ENCODE measurements at regions of chr18 and their contacts with region 1.

Region 1: DNA sequence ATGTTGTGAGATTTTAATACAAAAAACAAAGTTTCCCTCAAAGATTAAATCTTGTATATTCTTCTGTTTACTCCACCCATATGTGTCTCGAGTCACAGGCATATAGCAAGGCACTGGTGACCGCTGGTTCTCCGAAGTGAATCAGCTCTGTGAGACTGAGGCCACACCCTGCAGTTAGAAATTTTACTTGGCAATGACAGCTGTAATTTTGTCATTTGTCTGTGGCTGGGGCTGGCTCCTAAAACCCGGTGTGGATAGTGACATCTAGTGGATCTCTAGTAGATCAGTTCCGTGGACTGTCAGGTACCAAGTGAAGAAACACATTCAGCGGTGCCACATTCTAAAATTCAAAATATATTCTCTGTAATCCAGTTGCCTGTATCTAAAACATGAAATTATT is 278.0 kb downstream of the NEDD4L start:
- DNase-seq: peak; percentile 65
- H3K4me3 ChIP-seq: no peak overlapping the region
- H3K27ac ChIP-seq: peak overlapping the region; percentile 45
- H3K4me1 ChIP-seq: peaks cover 10% of the 10 kb centered on the region
- H3K27me3 ChIP-seq: no peaks in the 10 kb centered on the region
- CTCF ChIP-seq: peak; percentile 37 to 42
- POLR2A ChIP-seq: no peak

Region 2: GRCh38 chr18:57959278-57959677 is 362.7 kb before region 1 on chr18:
- CTCF ChIA-PET with region 1: no interaction called
- POLR2A ChIA-PET with region 1: no interaction called
- dilution Hi-C with region 1: no loop called
- intact Hi-C with region 1: loop called (anchors 10 kb)
- DNase-seq: peak; percentile 59
- H3K4me3 ChIP-seq: no peak overlapping the region
- H3K27ac ChIP-seq: no peak overlapping the region
- H3K4me1 ChIP-seq: peaks cover 3% of the 10 kb centered on the region
- H3K27me3 ChIP-seq: peaks cover 4 to 14% of the 10 kb centered on the region in 2 experiments
- CTCF ChIP-seq: peak; percentile 22 to 44
- POLR2A ChIP-seq: no peak

Region 3: DNA sequence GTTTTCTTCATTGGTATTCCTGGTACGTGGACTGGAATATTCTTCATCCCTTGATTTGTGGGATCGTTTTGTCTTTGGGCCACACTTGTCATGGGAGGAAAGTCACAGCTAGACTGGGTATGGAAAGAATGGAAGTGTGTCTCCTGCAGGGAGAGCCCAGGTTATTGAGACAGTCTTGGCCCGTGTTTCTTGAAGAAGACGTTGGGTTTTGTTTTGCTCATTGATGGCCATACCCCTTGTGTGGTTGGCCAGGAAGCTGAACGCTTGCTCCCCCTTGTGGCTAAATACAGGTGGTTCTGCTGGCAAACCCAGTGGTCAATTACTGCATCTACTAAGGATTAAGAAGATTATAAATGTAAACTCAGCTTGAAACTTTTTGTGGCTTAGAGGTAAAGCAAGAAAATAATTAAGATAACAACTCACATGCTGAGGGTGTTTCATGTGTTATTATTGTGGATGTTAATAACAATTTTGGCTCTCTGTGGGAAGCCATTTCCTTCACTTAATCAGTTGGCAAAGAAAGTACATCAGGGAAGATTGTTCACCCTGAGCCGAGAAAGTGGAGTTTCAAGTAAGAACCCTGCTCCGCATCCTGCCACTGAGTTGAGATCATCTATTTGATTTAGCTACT is 186.2 kb before region 1 on chr18:
- CTCF ChIA-PET with region 1: interaction called, 16 read pairs
- POLR2A ChIA-PET with region 1: no interaction called
- dilution Hi-C with region 1: no loop called
- intact Hi-C with region 1: loop called (anchors 5 kb)
- DNase-seq: peak; percentile 69
- H3K4me3 ChIP-seq: no peak overlapping the region
- H3K27ac ChIP-seq: no peak overlapping the region
- H3K4me1 ChIP-seq: peaks cover 2% of the 10 kb centered on the region
- H3K27me3 ChIP-seq: no peaks in the 10 kb centered on the region
- CTCF ChIP-seq: peak; percentile 85 to 91
- POLR2A ChIP-seq: no peak

Region 4: DNA sequence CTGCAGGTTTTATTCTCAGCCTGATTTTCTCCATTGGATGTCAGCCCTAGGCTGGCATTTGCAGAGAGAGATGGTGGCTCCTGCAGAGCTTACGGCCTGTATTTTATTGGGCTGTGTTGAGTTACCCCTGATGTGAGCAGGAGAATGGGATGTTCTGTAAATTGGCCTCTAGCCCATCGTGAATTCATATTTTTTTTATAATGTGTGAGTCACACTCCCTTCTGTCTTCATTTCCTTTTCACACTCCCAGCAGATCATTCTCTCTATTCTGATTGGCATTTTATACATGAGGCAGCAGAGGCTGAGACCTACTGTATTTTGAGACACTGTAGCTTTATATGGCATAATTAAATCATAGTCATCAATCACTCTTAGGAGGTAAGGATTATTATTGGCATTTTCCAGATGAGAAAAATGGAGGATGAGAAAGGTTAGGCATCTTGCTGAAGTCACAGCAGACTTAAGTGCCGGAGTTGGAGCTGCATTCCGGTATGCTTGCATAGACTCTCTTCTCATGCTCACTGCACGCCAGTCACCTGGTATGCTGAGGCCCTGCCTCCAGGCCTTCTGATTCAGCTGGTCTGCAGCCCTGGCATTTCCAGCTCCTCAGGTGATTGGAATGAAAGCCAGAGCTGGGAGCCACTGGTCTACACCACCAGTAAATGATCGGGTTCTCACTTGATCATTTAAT is 135.6 kb before region 1 on chr18:
- CTCF ChIA-PET with region 1: interaction called, 17 read pairs
- POLR2A ChIA-PET with region 1: no interaction called
- dilution Hi-C with region 1: no loop called
- intact Hi-C with region 1: no loop called
- DNase-seq: peak; percentile 85
- H3K4me3 ChIP-seq: no peak overlapping the region
- H3K27ac ChIP-seq: peak overlapping the region; percentile 27
- H3K4me1 ChIP-seq: peaks cover 23% of the 10 kb centered on the region
- H3K27me3 ChIP-seq: no peaks in the 10 kb centered on the region
- CTCF ChIP-seq: no peak
- POLR2A ChIP-seq: no peak

Region 5: DNA sequence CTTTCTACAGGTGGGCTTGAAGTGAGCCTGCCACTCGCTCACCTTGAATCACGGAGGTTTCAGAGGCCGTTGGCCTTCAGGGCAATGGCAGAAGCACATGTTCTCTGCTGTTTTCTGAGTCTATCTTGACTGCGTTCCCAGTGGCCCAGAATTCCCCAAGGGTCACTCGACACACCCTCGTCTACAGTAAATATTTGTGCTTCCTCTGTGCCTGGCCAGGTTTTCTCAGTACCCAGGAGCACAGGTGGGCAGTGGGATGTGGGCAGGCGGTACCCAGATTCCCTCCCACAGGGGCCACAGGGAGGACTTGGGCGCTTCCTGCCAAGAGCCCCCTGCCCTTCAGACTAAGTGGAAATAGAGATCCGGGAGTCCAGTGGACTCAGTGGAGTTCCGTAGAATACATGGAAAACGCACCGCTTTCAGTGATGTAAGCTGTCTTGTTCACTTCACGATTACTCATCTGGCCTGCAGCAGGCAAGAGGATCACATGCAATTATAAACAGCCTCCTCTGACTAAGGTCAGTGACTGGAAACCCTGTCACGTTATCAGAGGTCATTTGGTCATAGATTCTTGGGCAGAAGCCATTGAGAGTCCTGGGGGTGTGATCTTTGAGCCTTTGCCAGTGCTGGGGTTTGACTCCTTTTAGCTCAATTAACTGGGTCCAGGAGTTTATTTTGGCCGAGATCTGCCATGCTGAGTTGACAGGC is 98.1 kb before region 1 on chr18:
- CTCF ChIA-PET with region 1: interaction called, 21 read pairs
- POLR2A ChIA-PET with region 1: no interaction called
- dilution Hi-C with region 1: no loop called
- intact Hi-C with region 1: loop called (anchors 1 kb)
- DNase-seq: peak; percentile 98
- H3K4me3 ChIP-seq: peak overlapping the region in 1 of 3 experiments; percentile 94
- H3K27ac ChIP-seq: peak overlapping the region; percentile 98
- H3K4me1 ChIP-seq: peaks cover 48% of the 10 kb centered on the region
- H3K27me3 ChIP-seq: no peaks in the 10 kb centered on the region
- CTCF ChIP-seq: no peak
- POLR2A ChIP-seq: peak; percentile 56

Region 6: GRCh38 chr18:58263055-58263957 is 58.7 kb before region 1 on chr18:
- CTCF ChIA-PET with region 1: interaction called, 7 read pairs
- POLR2A ChIA-PET with region 1: no interaction called
- dilution Hi-C with region 1: no loop called
- intact Hi-C with region 1: loop called (anchors 2 kb)
- DNase-seq: peak; percentile 86
- H3K4me3 ChIP-seq: peak overlapping the region in 2 of 3 experiments; percentile 7 to 50
- H3K27ac ChIP-seq: peak overlapping the region; percentile 88
- H3K4me1 ChIP-seq: peaks cover 22% of the 10 kb centered on the region
- H3K27me3 ChIP-seq: no peaks in the 10 kb centered on the region
- CTCF ChIP-seq: no peak
- POLR2A ChIP-seq: no peak

Region 7: DNA sequence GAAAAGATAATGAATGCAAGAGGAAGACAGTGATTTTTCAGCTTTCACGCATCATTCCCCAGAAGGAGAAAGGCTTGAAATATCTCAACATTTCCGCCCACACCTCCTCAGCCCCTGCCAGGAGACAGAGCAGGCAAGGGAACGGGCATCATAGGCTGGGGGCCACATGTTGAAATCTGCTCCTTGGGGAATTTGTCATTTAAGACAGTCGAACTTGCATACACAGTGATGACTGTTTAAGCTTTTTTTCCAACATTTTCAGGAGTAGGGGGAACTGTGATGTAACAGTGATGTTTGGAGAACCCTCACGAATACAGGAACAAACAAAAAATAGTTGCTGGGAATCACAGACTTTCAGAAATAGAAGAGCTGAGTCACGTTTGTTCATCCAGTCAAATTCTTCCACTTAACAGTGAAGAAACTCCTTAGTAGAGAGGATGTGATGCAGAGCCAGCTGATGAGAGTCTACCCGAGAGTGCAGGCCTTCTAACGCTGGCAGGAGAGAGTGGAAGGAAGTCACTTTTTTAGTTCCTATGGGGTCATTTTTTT is 40.1 kb after region 1 on chr18:
- CTCF ChIA-PET with region 1: no interaction called
- POLR2A ChIA-PET with region 1: no interaction called
- dilution Hi-C with region 1: no loop called
- intact Hi-C with region 1: no loop called
- DNase-seq: peak; percentile 77
- H3K4me3 ChIP-seq: no peak overlapping the region
- H3K27ac ChIP-seq: peak overlapping the region; percentile 95
- H3K4me1 ChIP-seq: peaks cover 13% of the 10 kb centered on the region
- H3K27me3 ChIP-seq: no peaks in the 10 kb centered on the region
- CTCF ChIP-seq: no peak
- POLR2A ChIP-seq: no peak

Measured in endothelial cell of umbilical vein (primary cell).